ENCODE measurements at regions of chr4 and their contacts with region 1.

Region 1: GRCh38 chr4:26388671-26389070 is 67.9 kb downstream of the RBPJ start:
- DNase-seq: no peak
- ATAC-seq: no peak
- H3K4me3 ChIP-seq: no peak overlapping the region
- H3K4me3 Mint-ChIP-seq: no peak overlapping the region
- H3K27ac ChIP-seq: no peak overlapping the region
- H3K27ac Mint-ChIP-seq: no peak overlapping the region
- H3K4me1 ChIP-seq: peaks cover 3% of the 10 kb centered on the region in 2 experiments
- H3K4me1 Mint-ChIP-seq: peaks cover 11 to 17% (median 14%) of the 10 kb centered on the region in 3 donors
- H3K27me3 ChIP-seq: no peaks in the 10 kb centered on the region
- H3K27me3 Mint-ChIP-seq: no peaks in the 10 kb centered on the region

Region 2: DNA sequence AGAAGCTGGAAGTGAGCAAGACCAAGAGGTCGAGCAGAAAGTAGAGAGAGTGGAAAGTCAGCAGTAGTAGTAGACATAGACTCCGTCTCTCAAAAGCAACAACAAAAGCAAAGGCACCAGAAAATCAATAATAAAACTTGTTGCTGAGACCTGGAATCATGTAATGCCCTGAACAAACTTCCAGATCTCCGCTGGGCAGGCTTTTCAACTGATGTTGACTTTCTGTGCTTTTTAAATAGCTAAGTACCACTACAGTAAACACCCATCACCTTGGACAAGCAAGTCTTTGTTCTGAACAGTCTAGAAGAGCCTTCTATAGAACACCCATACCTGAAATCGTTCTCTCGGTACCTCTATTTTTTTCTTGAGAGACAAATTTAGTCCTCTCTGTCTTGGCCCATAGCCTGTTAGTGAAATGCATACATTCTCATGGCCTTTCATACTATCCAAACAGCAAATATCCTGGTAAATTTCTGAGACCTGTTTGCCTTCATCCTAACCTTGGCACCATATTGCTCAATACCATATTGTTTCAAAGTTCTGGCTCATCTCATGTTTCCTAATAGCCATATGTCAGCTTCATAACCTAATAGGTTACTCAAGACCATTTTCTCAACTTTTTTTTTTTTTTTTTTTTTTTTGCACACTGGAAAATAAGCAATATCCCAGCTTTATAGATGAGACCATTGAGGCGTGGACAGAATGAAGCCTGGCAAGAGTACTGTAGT is 268.4 kb before region 1 on chr4:
- CTCF ChIA-PET with region 1: interaction called in 1 of 2 experiments, 12 read pairs
- POLR2A ChIA-PET with region 1: no interaction called
- DNase-seq: no peak
- ATAC-seq: no peak
- H3K4me3 ChIP-seq: no peak overlapping the region
- H3K4me3 Mint-ChIP-seq: no peak overlapping the region
- H3K27ac ChIP-seq: no peak overlapping the region
- H3K27ac Mint-ChIP-seq: no peak overlapping the region
- H3K4me1 ChIP-seq: no peaks in the 10 kb centered on the region
- H3K4me1 Mint-ChIP-seq: no peaks in the 10 kb centered on the region
- H3K27me3 ChIP-seq: no peaks in the 10 kb centered on the region
- H3K27me3 Mint-ChIP-seq: peaks cover 0 to 8% of the 10 kb centered on the region in 2 donors